Naive thymus-derived CD4-positive, alpha-beta T cell (primary cell): ENCODE measurements at regions of chr3 and their contacts with region 1.

Region 1: DNA sequence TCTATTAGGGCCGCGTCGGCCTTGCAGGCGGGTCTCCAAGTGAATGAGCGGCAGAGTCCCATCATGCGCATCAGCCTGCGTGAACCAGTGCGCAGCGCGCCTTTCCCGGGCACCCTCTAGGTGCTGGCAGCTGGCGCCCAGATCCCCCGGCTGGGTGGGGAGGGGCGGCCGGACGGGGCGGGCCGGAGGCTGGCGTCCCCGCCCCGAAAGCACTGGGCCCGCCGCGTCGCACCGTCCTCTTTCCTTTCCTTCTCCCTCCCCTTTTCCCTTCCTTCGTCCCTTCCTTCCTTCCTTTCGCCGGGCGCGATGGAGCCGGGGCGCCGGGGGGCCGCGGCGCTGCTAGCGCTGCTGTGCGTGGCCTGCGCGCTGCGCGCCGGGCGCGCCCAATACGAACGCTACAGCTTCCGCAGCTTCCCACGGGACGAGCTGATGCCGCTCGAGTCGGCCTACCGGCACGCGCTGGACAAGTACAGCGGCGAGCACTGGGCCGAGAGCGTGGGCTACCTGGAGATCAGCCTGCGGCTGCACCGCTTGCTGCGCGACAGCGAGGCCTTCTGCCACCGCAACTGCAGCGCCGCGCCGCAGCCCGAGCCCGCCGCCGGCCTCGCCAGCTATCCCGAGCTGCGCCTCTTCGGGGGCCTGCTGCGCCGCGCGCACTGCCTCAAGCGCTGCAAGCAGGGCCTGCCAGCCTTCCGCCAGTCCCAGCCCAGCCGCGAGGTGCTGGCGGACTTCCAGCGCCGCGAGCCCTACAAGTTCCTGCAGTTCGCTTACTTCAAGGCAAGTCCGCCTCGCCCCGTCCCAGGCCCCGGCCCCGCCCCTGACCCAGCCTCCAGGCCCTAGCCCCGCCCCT is at the start of gene CRTAP:
- DNase-seq: peak; percentile 69 to 86 (median 79)
- ATAC-seq: peak; percentile 92
- H3K4me3 ChIP-seq: peak within 1 kb of the TSS; percentile 82
- H3K4me3 Mint-ChIP-seq: peak within 1 kb of the TSS; percentile 88 to 95 (median 92)
- H3K27ac ChIP-seq: peak within 1 kb of the TSS; percentile 69
- H3K27ac Mint-ChIP-seq: peak within 1 kb of the TSS; percentile 75 to 91 (median 85)
- H3K4me1 ChIP-seq: peaks cover 17 to 23% of the 10 kb centered on the region in 2 donors
- H3K4me1 Mint-ChIP-seq: peaks cover 23 to 52% (median 37%) of the 10 kb centered on the region in 7 donors
- H3K27me3 ChIP-seq: no peaks in the 10 kb centered on the region
- H3K27me3 Mint-ChIP-seq: no peaks in the 10 kb centered on the region
- total RNA-seq, gene CRTAP: 27.1 to 86.1 (median 46.4) TPM

Region 2: DNA sequence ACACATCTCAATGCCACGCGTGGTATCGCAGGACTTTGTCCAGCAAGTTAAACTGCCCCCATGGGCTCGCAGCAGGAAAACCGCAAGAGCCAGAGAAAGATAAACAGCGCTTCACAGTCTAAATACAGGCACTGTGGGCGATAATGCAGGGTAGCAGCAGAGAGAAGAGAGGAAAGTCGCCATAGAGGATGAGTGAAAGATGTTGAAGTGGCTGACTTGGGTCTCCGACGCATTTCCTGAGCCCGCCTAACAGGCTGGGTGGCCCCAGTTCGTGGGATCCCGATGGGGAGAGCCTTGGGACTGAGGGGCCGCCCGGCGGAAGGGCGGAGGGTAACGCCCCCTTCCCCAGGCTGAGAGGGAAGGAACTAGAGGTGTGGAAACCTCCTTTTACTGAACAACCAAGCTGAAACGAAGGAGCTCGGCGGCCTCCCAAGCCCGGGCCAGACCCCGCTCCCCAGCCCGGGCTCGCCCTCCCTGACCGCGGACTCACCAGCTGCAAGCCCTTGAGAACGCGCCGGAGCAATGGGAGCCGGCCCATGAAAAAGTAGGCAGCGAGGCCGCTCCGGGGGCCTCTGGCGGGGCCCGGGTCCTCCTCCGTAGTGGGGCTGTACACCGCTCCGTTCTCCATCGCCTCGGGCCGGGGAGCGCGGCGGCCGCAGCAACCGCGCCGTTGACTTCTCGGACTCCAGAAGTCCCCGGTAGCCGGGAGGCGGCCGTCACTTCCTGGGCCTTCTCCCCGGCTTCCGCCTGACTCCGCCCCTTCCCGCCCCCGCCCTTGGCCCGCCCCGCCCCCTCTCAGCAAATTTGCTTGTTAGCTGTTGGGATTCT is 611.7 kb before region 1 on chr3 and contains the start of gene CMTM6:
- CTCF ChIA-PET with region 1: no interaction called
- POLR2A ChIA-PET with region 1: no interaction called
- intact Hi-C with region 1: loop called in 1 of 2 experiments (anchors 5 kb)
- DNase-seq: peak; percentile 49 to 77 (median 70)
- ATAC-seq: peak; percentile 92
- H3K4me3 ChIP-seq: peak within 1 kb of the TSS; percentile 89
- H3K4me3 Mint-ChIP-seq: peak within 1 kb of the TSS; percentile 79 to 97 (median 93)
- H3K27ac ChIP-seq: peak within 1 kb of the TSS; percentile 98
- H3K27ac Mint-ChIP-seq: peak within 1 kb of the TSS; percentile 86 to 98 (median 90)
- H3K4me1 ChIP-seq: peaks cover 6 to 23% of the 10 kb centered on the region in 2 donors
- H3K4me1 Mint-ChIP-seq: peaks cover 28 to 48% (median 43%) of the 10 kb centered on the region in 7 donors
- H3K27me3 ChIP-seq: no peaks in the 10 kb centered on the region
- H3K27me3 Mint-ChIP-seq: peaks cover 0 to 4% (median 0%) of the 10 kb centered on the region in 5 donors
- total RNA-seq, gene CMTM6: 24.1 to 61.1 (median 38.1) TPM

Region 3: GRCh38 chr3:33096093-33096868 is 17.7 kb before region 1 on chr3:
- CTCF ChIA-PET with region 1: no interaction called
- POLR2A ChIA-PET with region 1: interaction called, 4 read pairs
- intact Hi-C with region 1: loop called (anchors 1 kb)
- DNase-seq: peak in 8 of 9 donors; percentile 23 to 52 (median 39)
- ATAC-seq: peak; percentile 71
- H3K4me3 ChIP-seq: peak overlapping the region; percentile 90
- H3K4me3 Mint-ChIP-seq: peak overlapping the region; percentile 90 to 98 (median 94)
- H3K27ac ChIP-seq: peak overlapping the region; percentile 71
- H3K27ac Mint-ChIP-seq: peak overlapping the region; percentile 66 to 87 (median 80)
- H3K4me1 ChIP-seq: peaks cover 0 to 17% of the 10 kb centered on the region in 2 donors
- H3K4me1 Mint-ChIP-seq: peaks cover 24 to 45% (median 37%) of the 10 kb centered on the region in 7 donors
- H3K27me3 ChIP-seq: no peaks in the 10 kb centered on the region
- H3K27me3 Mint-ChIP-seq: peaks cover 0 to 4% (median 0%) of the 10 kb centered on the region in 5 donors

Region 4: GRCh38 chr3:33211444-33211843 is 97.4 kb after region 1 on chr3:
- CTCF ChIA-PET with region 1: no interaction called
- POLR2A ChIA-PET with region 1: no interaction called
- intact Hi-C with region 1: no loop called
- DNase-seq: no peak
- ATAC-seq: no peak
- H3K4me3 ChIP-seq: no peak overlapping the region
- H3K4me3 Mint-ChIP-seq: no peak overlapping the region
- H3K27ac ChIP-seq: no peak overlapping the region
- H3K27ac Mint-ChIP-seq: no peak overlapping the region
- H3K4me1 ChIP-seq: no peaks in the 10 kb centered on the region
- H3K4me1 Mint-ChIP-seq: no peaks in the 10 kb centered on the region
- H3K27me3 ChIP-seq: no peaks in the 10 kb centered on the region
- H3K27me3 Mint-ChIP-seq: peaks cover 39 to 59% (median 48%) of the 10 kb centered on the region in 5 donors

Region 5: DNA sequence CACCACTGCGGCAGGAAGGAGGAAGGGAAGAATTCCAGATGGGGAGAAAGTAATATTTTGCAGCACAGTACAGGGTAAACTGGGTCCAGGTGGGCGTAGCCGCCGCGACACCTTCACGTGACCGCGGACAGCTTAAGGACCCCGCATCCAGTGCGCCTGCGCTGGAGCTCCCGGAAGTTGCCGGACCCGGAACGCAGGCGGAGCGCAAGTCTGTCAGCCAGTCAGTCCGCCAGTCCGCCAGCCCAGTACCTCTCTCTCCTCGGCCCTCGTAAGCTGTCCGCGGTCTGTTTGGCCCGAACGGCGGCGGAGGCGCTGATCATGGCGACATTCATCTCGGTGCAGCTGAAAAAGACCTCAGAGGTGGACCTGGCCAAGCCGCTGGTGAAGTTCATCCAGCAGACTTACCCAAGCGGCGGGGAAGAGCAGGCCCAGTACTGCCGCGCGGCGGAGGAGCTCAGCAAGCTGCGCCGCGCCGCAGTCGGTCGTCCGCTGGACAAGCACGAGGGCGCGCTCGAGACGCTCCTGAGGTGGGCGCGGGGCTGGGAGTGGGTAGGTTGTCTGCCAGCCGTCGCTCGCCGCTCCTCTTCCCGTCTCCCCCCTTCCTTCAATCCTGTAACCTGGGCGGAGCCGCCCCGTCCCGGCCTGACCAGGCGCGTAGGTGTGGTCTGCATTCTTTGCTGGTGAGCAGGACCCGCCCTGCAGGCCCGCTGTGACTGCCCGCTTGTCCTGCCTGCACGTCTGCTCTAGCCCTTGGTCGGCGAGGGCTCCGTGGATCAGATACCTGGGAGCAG is 684.6 kb after region 1 on chr3 and contains the start of gene PDCD6IP:
- CTCF ChIA-PET with region 1: no interaction called
- POLR2A ChIA-PET with region 1: interaction called, 4 read pairs
- intact Hi-C with region 1: loop called in 1 of 2 experiments (anchors 5 kb)
- DNase-seq: peak; percentile 80 to 90 (median 86)
- ATAC-seq: peak; percentile 88
- H3K4me3 ChIP-seq: peak within 1 kb of the TSS; percentile 97
- H3K4me3 Mint-ChIP-seq: peak within 1 kb of the TSS; percentile 87 to 100 (median 99)
- H3K27ac ChIP-seq: peak within 1 kb of the TSS; percentile 86
- H3K27ac Mint-ChIP-seq: peak within 1 kb of the TSS; percentile 92 to 100 (median 97)
- H3K4me1 ChIP-seq: peaks cover 21 to 24% of the 10 kb centered on the region in 2 donors
- H3K4me1 Mint-ChIP-seq: peaks cover 40 to 77% (median 67%) of the 10 kb centered on the region in 7 donors
- H3K27me3 ChIP-seq: no peaks in the 10 kb centered on the region
- H3K27me3 Mint-ChIP-seq: peaks cover 0 to 7% (median 0%) of the 10 kb centered on the region in 5 donors
- total RNA-seq, gene PDCD6IP: 139 to 221 (median 202) TPM